GM12878 (cell line): ENCODE measurements at regions of chr12 and their contacts with region 1.

Region 1: DNA sequence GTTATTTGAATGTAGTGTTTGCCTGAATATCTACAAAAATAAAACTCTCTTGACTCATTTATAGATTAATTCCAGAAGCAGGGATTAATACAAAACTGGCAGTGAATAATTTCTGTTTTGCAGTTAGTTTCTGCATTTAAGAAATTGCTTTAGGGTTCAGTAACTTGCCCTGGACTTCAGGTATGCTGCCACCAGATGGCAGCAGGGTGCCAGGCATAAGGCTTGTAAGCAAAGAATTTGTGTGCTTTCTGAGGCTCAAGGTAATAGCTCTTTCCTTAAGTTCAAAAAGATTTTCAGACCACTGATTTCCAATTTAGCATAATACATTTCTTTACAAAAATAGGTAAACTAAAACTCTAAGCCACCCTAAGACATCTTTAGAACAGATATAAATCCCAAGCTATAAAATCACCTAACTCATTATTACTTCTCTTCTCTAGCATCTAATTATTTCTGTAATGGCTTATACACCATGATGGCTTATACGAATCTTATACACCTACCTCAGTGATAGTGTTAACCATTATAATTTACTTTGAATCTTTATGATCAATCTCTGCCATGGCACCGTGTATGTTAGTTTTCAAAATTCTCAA is 398.3 kb downstream of the APAF1 start:
- DNase-seq: peak; percentile 28
- ATAC-seq: peak; percentile 82
- H3K4me3 ChIP-seq: no peak overlapping the region
- H3K27ac ChIP-seq: no peak overlapping the region
- H3K4me1 ChIP-seq: no peaks in the 10 kb centered on the region
- H3K27me3 ChIP-seq: peaks cover 0 to 3% of the 10 kb centered on the region in 2 experiments; a peak in 1 of 4 replicates
- CTCF ChIP-seq: peak; percentile 84 to 88 (median 86)
- EP300 ChIP-seq: no peak
- POLR2A ChIP-seq: no peak
- RAD21 ChIP-seq: peak; percentile 97

Region 2: DNA sequence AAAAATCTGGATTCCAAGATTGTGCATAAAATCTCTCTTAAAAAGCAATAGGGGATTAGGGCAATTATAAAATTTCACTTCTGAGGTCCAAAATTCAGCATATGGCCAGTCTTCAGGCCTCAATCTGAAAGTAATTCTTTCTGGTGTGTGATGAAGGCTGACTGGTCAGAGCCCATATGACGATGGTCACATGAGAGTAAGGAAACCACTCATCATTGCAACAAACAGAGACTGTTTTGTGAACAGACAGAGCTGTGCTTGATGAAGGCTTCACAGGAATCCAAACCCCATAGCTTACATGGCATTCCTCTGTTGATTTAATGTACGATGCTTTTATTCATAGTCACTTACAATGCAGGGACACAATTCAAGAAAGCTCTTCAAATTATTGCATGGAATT is 160.2 kb before region 1 on chr12:
- CTCF ChIA-PET with region 1: no interaction called
- POLR2A ChIA-PET with region 1: no interaction called
- RAD21 ChIA-PET with region 1: no interaction called
- SMC1A ChIA-PET with region 1: no interaction called
- in situ Hi-C with region 1: no loop called
- intact Hi-C with region 1: no loop called
- DNase-seq: no peak
- ATAC-seq: no peak
- H3K4me3 ChIP-seq: no peak overlapping the region
- H3K27ac ChIP-seq: no peak overlapping the region
- H3K4me1 ChIP-seq: no peaks in the 10 kb centered on the region
- H3K27me3 ChIP-seq: peaks cover 0 to 4% of the 10 kb centered on the region in 2 experiments; a peak in 1 of 4 replicates
- CTCF ChIP-seq: no peak
- EP300 ChIP-seq: no peak
- POLR2A ChIP-seq: no peak
- RAD21 ChIP-seq: no peak

Region 3: GRCh38 chr12:99170037-99170436 is 126.6 kb after region 1 on chr12:
- CTCF ChIA-PET with region 1: interaction called, 8 read pairs
- POLR2A ChIA-PET with region 1: no interaction called
- RAD21 ChIA-PET with region 1: interaction called, 5 read pairs
- SMC1A ChIA-PET with region 1: interaction called, 10 read pairs
- in situ Hi-C with region 1: no loop called
- intact Hi-C with region 1: no loop called
- DNase-seq: no peak
- ATAC-seq: no peak
- H3K4me3 ChIP-seq: no peak overlapping the region
- H3K27ac ChIP-seq: no peak overlapping the region
- H3K4me1 ChIP-seq: no peaks in the 10 kb centered on the region
- H3K27me3 ChIP-seq: peaks cover 0 to 3% of the 10 kb centered on the region in 2 experiments; a peak in 1 of 4 replicates
- CTCF ChIP-seq: no peak
- EP300 ChIP-seq: no peak
- POLR2A ChIP-seq: no peak
- RAD21 ChIP-seq: no peak

Region 4: GRCh38 chr12:99287136-99287535 is 243.7 kb after region 1 on chr12:
- CTCF ChIA-PET with region 1: interaction called, 18 read pairs
- POLR2A ChIA-PET with region 1: no interaction called
- RAD21 ChIA-PET with region 1: interaction called, 5 read pairs
- SMC1A ChIA-PET with region 1: interaction called, 5 read pairs
- in situ Hi-C with region 1: no loop called
- intact Hi-C with region 1: no loop called
- DNase-seq: no peak
- ATAC-seq: no peak
- H3K4me3 ChIP-seq: no peak overlapping the region
- H3K27ac ChIP-seq: no peak overlapping the region
- H3K4me1 ChIP-seq: no peaks in the 10 kb centered on the region
- H3K27me3 ChIP-seq: no peaks in the 10 kb centered on the region
- CTCF ChIP-seq: 0 out of 6 replicates have a peak, but pooled peaks of 1 of the 3 experiments have one; percentile 3
- EP300 ChIP-seq: no peak
- POLR2A ChIP-seq: no peak
- RAD21 ChIP-seq: no peak

Region 5: DNA sequence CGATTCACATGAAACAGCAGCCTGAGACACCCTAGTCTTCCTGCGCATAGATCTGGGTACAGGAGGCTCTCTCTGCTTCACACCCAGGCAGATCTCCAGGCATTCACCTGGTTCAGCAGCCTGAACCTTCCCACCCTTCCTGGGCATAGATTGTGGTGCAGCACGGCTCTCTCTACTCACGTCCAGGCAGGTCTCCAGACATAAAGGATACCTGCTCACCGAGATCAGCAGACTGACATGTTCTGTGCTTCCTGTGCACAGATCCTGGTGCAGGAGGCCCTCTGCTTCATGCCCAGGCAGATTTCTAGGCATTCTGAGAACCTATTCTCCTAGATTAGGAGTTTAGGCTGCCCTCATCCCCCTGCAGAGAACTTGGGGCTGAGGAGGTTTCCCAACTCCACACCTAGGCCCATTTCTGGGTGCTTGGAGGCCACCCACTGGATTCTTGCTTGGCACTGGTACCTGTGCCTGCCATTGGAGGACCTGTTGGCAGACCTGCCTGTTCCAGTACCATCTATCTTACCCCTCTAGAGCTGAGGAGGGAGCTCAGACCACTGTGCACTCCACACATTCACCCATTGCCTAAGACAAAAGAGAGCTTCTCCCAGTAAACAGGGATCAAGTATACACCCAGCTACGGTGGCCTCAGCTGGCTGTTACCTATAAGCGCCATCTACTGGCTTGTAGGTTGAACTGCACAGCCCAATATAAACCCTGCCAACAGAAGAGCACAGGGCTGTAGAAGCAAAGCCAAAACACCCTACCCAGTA is 576.2 kb after region 1 on chr12:
- CTCF ChIA-PET with region 1: interaction called, 48 read pairs
- POLR2A ChIA-PET with region 1: no interaction called
- RAD21 ChIA-PET with region 1: interaction called, 27 read pairs
- SMC1A ChIA-PET with region 1: interaction called, 9 read pairs
- in situ Hi-C with region 1: no loop called
- intact Hi-C with region 1: loop called (anchors 1 kb)
- DNase-seq: no peak
- ATAC-seq: peak; percentile 97
- H3K4me3 ChIP-seq: no peak overlapping the region
- H3K27ac ChIP-seq: no peak overlapping the region
- H3K4me1 ChIP-seq: no peaks in the 10 kb centered on the region
- H3K27me3 ChIP-seq: no peaks in the 10 kb centered on the region
- CTCF ChIP-seq: peak; percentile 67 to 85 (median 82)
- EP300 ChIP-seq: no peak
- POLR2A ChIP-seq: no peak
- RAD21 ChIP-seq: peak; percentile 82

Region 6: GRCh38 chr12:99767809-99768208 is 724.4 kb after region 1 on chr12:
- CTCF ChIA-PET with region 1: interaction called, 47 read pairs
- POLR2A ChIA-PET with region 1: no interaction called
- RAD21 ChIA-PET with region 1: interaction called, 19 read pairs
- SMC1A ChIA-PET with region 1: interaction called, 14 read pairs
- in situ Hi-C with region 1: loop called (anchors 5 kb)
- intact Hi-C with region 1: loop called (anchors 1 kb)
- DNase-seq: no peak
- ATAC-seq: no peak
- H3K4me3 ChIP-seq: no peak overlapping the region
- H3K27ac ChIP-seq: no peak overlapping the region
- H3K4me1 ChIP-seq: no peaks in the 10 kb centered on the region
- H3K27me3 ChIP-seq: no peaks in the 10 kb centered on the region
- CTCF ChIP-seq: peak in 1 of 3 experiments; percentile 41; a peak in 3 of 6 replicates
- EP300 ChIP-seq: no peak
- POLR2A ChIP-seq: no peak
- RAD21 ChIP-seq: peak; percentile 51; the same call in 1 of the 2 replicates